ENCODE measurements at regions of chrX and their contacts with region 1.

Region 1: DNA sequence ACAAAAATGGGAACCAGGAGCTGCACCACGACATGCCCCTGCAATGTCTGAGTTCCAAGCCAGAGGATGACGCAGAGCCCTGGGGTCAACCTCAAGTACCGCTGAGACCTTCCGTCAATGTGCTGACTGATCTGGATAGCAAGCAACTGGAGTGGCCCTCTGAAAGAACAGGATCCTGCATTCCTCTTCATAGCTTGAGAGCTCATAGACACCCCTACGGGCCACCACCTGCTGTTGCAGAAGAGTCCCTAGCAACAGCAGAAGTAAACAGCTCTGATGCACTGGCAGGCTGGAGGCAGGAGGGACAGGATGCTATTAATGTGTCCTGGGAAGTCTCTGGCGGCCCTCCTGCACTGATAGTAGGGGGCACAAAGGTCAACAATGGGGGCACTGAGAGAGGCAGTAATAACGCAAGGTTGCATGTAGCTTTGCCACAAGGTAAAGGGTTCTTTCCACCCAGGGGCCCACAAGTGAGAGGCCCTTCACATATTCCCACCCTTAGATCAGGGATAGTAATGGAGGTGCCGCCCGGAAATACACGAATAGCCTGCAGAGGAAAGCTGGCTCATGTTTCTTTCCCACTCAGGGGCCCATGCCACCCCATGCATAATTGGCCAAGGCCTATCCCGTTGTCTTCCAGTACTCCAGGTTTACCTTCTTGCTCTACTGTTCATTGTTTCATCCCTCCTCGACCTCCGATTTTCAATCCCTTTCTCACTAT is 1.3 kb downstream of the PRR32 start:
- DNase-seq: peak; percentile 62
- ATAC-seq: peak; percentile 96

Region 2: DNA sequence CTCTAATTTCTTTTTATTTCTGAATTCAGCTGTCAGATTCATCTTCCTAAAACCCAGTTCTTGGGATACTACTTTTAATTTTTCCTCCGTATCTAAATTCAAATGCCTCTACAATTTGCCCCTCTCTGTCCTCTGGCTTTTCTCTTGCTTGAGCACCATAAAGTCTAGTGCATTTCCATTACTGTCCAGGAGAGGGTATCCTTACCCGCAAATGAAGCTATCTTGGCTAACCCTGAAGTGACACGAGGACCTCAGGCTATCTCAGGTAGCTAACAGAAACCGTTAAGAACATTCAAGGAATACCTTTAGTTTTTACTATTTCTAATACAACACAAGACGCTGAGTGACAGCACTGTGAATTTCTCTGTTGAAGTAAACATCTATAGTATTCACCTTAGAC is 50.7 kb before region 1 on chrX:
- intact Hi-C with region 1: loop called (anchors 5 kb)
- DNase-seq: no peak
- ATAC-seq: no peak

Region 3: GRCh38 chrX:126985981-126986380 is 165.1 kb after region 1 on chrX:
- intact Hi-C with region 1: loop called (anchors 5 kb)
- DNase-seq: no peak
- ATAC-seq: no peak

Region 4: DNA sequence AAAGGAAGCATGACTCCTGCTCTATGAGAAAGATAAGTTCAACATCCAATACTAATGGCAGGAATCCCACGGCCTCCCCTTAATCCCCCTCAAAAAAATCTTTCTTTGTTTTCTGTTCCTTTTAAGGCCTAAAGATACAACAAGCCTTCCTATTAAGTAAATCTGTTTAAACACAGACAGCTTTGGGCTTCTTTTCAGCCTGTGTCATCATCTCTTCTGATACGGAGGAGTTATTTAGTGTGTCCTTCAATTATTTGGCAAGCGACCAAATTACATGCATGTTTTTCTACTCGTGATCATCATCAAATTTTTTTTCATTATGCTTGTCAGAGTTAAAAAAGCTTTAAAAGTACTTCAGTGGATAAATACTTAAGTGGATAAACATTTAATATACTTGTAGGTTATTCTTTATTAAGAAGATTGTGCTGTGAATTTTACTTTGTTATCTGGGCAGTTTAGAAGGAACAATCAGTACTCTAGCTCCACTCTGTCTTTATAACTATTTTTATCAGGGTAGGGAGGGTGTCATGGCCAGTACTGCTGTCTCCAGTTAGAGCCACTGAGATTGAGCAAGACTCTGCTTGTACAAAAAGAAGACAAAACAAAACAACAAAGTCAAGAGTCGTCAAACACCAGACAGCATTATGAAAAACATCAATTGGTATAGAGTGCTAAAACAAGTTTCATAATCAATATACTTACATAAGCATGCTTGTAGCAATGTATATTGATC is 209.3 kb after region 1 on chrX:
- intact Hi-C with region 1: loop called (anchors 2 kb)
- DNase-seq: no peak
- ATAC-seq: peak; percentile 95

Measured in Right ventricle myocardium inferior (tissue), 1 donor.